Transverse colon (tissue), 4 donors: ENCODE measurements at regions of chr7 and their contacts with region 1.

Region 1: DNA sequence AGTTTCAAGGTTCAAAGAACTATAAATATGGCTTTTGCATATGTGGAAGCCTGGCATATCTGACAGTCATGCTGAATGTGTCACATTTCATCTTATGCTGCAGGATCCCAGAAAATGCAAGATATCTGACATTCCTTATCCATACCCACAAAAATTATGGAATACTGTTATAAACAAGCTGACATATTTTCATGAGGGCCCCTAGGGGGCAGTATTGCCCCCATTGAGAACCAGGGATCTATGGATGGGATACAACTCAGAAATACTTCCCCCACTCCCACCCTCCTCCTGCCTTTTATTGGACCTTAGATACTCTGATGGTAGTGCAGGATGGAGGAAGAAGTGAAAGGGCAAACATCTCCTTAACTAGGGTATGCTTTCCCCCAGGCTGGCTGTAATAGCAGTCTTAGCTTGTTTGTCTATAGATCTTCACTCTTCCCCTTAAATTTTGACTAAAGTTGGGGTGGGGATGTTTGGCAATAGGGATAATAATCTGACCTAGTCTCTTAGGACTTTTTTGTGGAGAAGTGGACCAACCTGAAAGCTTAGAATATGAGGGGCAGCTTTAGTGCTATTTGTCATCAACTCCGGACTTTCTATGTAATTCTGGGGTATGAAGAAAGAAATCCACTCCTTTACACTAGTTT is 3.5 kb upstream of the GNGT1 start:
- DNase-seq: no peak
- H3K4me3 ChIP-seq: no peak overlapping the region
- H3K27ac ChIP-seq: no peak overlapping the region
- H3K4me1 ChIP-seq: no peaks in the 10 kb centered on the region
- H3K27me3 ChIP-seq: no peaks in the 10 kb centered on the region
- CTCF ChIP-seq: peak; percentile 47 to 74 (median 64)
- EP300 ChIP-seq: no peak
- POLR2A ChIP-seq: no peak

Region 2: GRCh38 chr7:94004024-94004951 is 101.4 kb after region 1 on chr7 and contains the start of gene BET1:
- in situ Hi-C with region 1: no loop called
- intact Hi-C with region 1: loop called (anchors 10 kb)
- DNase-seq: peak; percentile 96
- H3K4me3 ChIP-seq: peak within 1 kb of the TSS; percentile 75 to 96 (median 94)
- H3K27ac ChIP-seq: peak within 1 kb of the TSS; percentile 87 to 94 (median 89)
- H3K4me1 ChIP-seq: peaks cover 5 to 23% (median 14%) of the 10 kb centered on the region in 4 donors
- H3K27me3 ChIP-seq: peaks cover 10% of the 10 kb centered on the region
- CTCF ChIP-seq: no peak
- EP300 ChIP-seq: no peak
- POLR2A ChIP-seq: peak; percentile 64
- total RNA-seq, gene BET1: 15.7 to 28.9 (median 21.2) TPM

Region 3: DNA sequence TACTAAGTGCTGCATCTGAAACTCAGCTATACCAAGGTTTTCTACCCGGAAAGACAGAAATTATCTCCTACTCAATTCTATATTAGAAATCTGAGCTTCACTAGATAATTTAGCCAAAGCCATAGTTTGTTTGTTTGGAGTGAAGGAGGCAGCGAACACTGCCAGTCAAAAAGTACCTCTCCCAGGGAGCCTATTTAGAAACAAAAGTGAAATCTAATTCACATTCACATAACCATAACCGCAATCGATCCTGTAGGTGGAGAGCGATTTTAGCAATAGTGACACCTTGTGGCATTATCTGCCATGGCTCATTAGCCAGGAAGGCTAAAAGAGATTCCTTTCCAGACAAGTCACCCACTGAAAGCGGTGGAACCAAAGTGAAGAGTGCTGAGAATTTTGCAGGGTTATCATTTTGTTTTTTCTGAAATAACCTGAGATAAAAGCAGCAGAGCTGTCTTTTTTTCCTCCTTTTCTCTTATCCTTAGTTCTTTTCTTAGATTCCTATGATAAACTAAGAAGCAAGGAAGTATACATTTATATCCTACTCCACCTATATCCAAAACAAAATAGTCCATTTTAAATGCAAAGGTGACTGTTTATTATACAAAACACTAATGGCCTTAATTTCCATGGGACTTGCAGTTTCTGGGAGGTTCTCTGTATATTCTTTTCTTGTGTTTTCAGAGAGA is 184.9 kb after region 1 on chr7:
- in situ Hi-C with region 1: loop called in 2 of 4 experiments (anchors 10 to 25 kb)
- intact Hi-C with region 1: no loop called
- DNase-seq: peak; percentile 33
- H3K4me3 ChIP-seq: peak overlapping the region in 1 of 4 donors; percentile 36
- H3K27ac ChIP-seq: no peak overlapping the region
- H3K4me1 ChIP-seq: peaks cover 0 to 9% (median 5%) of the 10 kb centered on the region in 4 donors
- H3K27me3 ChIP-seq: no peaks in the 10 kb centered on the region
- CTCF ChIP-seq: peak; percentile 63 to 71 (median 68)
- EP300 ChIP-seq: no peak
- POLR2A ChIP-seq: no peak

Region 4: DNA sequence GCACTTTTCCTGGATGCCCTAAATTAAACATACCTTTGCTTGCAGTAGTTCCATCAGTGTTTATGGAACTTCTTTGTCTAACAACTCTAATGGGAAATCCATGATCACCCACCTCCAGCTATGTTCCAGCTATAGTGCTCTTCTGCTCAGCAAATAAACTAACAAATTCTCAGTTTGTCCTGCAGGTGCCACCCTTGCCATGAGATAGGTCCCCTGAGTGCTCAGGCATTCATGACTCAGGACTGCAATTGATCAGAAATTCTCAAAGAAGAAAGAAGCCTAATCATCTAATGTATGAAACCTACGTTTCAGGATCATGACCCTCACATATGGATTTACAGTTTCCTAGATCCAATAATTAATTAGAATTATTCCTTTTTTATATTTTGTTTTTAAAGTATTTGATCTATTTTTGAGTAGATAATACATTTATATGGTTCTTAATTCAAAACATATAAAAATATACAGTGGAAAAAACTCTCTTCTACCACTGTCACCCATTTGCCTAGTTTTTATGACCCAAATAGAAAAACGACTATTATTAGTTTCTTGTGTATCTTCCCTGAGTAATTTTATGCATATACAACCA is 1820.8 kb after region 1 on chr7:
- in situ Hi-C with region 1: no loop called
- intact Hi-C with region 1: no loop called
- DNase-seq: no peak
- H3K4me3 ChIP-seq: no peak overlapping the region
- H3K27ac ChIP-seq: no peak overlapping the region
- H3K4me1 ChIP-seq: no peaks in the 10 kb centered on the region
- H3K27me3 ChIP-seq: peaks cover 5% of the 10 kb centered on the region
- CTCF ChIP-seq: peak in 4 of 5 experiments; percentile 10 to 30 (median 24)
- EP300 ChIP-seq: no peak
- POLR2A ChIP-seq: no peak